Naive thymus-derived CD4-positive, alpha-beta T cell (primary cell): ENCODE measurements at regions of chr19 and their contacts with region 1.

Region 1: DNA sequence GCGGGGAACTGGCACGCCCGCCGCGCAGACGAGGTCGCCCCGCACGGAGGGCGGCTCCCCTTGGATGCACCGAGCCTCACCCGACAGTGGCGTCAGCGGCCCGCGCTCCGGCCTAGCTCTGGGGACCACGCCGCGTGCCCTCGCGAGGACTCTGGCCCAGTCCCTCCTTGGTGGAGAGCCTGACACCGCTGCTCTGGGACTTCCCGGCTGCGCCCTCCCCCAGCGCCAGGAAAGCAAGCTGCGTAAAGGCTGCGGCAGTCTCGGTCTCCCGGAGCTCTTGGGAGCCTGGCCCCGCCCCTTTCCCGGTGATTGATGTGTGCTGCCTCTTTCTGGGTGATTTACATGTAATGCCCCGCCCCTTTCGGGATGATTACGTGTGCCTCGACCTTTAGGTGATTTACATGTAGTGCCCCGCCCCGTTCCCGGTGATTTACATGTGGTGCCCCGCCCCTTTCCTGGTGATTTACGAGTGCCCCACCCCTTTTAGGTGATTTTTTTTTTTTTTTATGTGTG is at the start of gene LENG9:
- DNase-seq: peak; percentile 73 to 97 (median 87)
- ATAC-seq: peak; percentile 81
- H3K4me3 ChIP-seq: peak within 1 kb of the TSS; percentile 88
- H3K4me3 Mint-ChIP-seq: peak within 1 kb of the TSS; percentile 84 to 95 (median 92)
- H3K27ac ChIP-seq: peak within 1 kb of the TSS; percentile 71
- H3K27ac Mint-ChIP-seq: peak within 1 kb of the TSS; percentile 86 to 98 (median 93)
- H3K4me1 ChIP-seq: peaks cover 17 to 23% of the 10 kb centered on the region in 2 donors
- H3K4me1 Mint-ChIP-seq: peaks cover 16 to 35% (median 33%) of the 10 kb centered on the region in 7 donors
- H3K27me3 ChIP-seq: peaks cover 0 to 3% of the 10 kb centered on the region in 2 donors
- H3K27me3 Mint-ChIP-seq: peaks cover 5 to 23% (median 7%) of the 10 kb centered on the region in 5 donors
- total RNA-seq, gene LENG9: 3.5 to 6.1 (median 4.3) TPM

Region 2: DNA sequence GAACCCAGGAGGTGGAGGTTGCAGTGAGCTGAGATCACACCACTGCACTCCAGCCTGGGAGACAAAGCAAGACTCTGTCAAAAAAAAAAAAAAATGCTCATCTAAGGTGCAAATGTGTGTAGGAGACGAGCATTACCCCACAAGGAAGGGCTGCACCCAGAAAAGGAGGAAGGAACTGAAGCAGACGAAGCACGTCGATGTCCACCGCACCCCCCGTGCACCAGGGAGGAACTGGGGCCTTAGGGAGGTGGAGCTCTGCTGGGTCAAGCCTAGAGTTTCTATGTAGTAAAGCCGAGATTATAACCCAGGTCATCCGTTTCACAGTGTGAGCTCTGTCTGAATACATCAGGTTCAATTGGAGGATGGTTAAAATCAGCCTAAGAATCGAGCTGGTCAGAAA is 400.9 kb before region 1 on chr19:
- CTCF ChIA-PET with region 1: no interaction called
- POLR2A ChIA-PET with region 1: no interaction called
- intact Hi-C with region 1: no loop called
- DNase-seq: no peak
- ATAC-seq: peak; percentile 41
- H3K4me3 ChIP-seq: no peak overlapping the region
- H3K4me3 Mint-ChIP-seq: no peak overlapping the region
- H3K27ac ChIP-seq: no peak overlapping the region
- H3K27ac Mint-ChIP-seq: no peak overlapping the region
- H3K4me1 ChIP-seq: no peaks in the 10 kb centered on the region
- H3K4me1 Mint-ChIP-seq: peaks cover 0 to 2% (median 0%) of the 10 kb centered on the region in 7 donors
- H3K27me3 ChIP-seq: no peaks in the 10 kb centered on the region
- H3K27me3 Mint-ChIP-seq: peaks cover 11 to 55% (median 21%) of the 10 kb centered on the region in 5 donors

Region 3: GRCh38 chr19:54137086-54137921 is 326.3 kb before region 1 on chr19 and contains the start of gene CNOT3:
- CTCF ChIA-PET with region 1: no interaction called
- POLR2A ChIA-PET with region 1: no interaction called
- intact Hi-C with region 1: loop called (anchors 1 to 10 kb)
- DNase-seq: peak; percentile 90 to 100 (median 100)
- ATAC-seq: peak; percentile 88
- H3K4me3 ChIP-seq: peak within 1 kb of the TSS; percentile 66
- H3K4me3 Mint-ChIP-seq: peak within 1 kb of the TSS; percentile 87 to 98 (median 90)
- H3K27ac ChIP-seq: peak within 1 kb of the TSS; percentile 97
- H3K27ac Mint-ChIP-seq: peak within 1 kb of the TSS; percentile 85 to 94 (median 92)
- H3K4me1 ChIP-seq: peaks cover 19 to 30% of the 10 kb centered on the region in 2 donors
- H3K4me1 Mint-ChIP-seq: peaks cover 33 to 60% (median 46%) of the 10 kb centered on the region in 7 donors
- H3K27me3 ChIP-seq: no peaks in the 10 kb centered on the region
- H3K27me3 Mint-ChIP-seq: no peaks in the 10 kb centered on the region
- total RNA-seq, gene CNOT3: 38.0 to 84.6 (median 63.9) TPM

Region 4: GRCh38 chr19:54448774-54449700 is 14.6 kb before region 1 on chr19 and contains the start of gene LENG8:
- CTCF ChIA-PET with region 1: interaction called, 3 read pairs
- POLR2A ChIA-PET with region 1: interaction called, 67 read pairs
- intact Hi-C with region 1: loop called (anchors 1 kb)
- DNase-seq: peak; percentile 95 to 99 (median 98)
- ATAC-seq: peak; percentile 94
- H3K4me3 ChIP-seq: peak within 1 kb of the TSS; percentile 85
- H3K4me3 Mint-ChIP-seq: peak within 1 kb of the TSS; percentile 93 to 99 (median 97)
- H3K27ac ChIP-seq: peak within 1 kb of the TSS; percentile 94
- H3K27ac Mint-ChIP-seq: peak within 1 kb of the TSS; percentile 97 to 100 (median 100)
- H3K4me1 ChIP-seq: peaks cover 19 to 39% of the 10 kb centered on the region in 2 donors
- H3K4me1 Mint-ChIP-seq: peaks cover 31 to 61% (median 54%) of the 10 kb centered on the region in 7 donors
- H3K27me3 ChIP-seq: no peaks in the 10 kb centered on the region
- H3K27me3 Mint-ChIP-seq: peaks cover 0 to 3% (median 0%) of the 10 kb centered on the region in 5 donors
- total RNA-seq, gene LENG8: 238 to 685 (median 503) TPM

Region 5: GRCh38 chr19:54492568-54492967 is 29.0 kb after region 1 on chr19:
- CTCF ChIA-PET with region 1: no interaction called
- POLR2A ChIA-PET with region 1: no interaction called
- intact Hi-C with region 1: no loop called
- DNase-seq: no peak
- ATAC-seq: no peak
- H3K4me3 ChIP-seq: no peak overlapping the region
- H3K4me3 Mint-ChIP-seq: no peak overlapping the region
- H3K27ac ChIP-seq: no peak overlapping the region
- H3K27ac Mint-ChIP-seq: no peak overlapping the region
- H3K4me1 ChIP-seq: no peaks in the 10 kb centered on the region
- H3K4me1 Mint-ChIP-seq: peaks cover 2 to 16% (median 6%) of the 10 kb centered on the region in 7 donors
- H3K27me3 ChIP-seq: no peaks in the 10 kb centered on the region
- H3K27me3 Mint-ChIP-seq: peaks cover 7 to 42% (median 18%) of the 10 kb centered on the region in 5 donors

Region 6: DNA sequence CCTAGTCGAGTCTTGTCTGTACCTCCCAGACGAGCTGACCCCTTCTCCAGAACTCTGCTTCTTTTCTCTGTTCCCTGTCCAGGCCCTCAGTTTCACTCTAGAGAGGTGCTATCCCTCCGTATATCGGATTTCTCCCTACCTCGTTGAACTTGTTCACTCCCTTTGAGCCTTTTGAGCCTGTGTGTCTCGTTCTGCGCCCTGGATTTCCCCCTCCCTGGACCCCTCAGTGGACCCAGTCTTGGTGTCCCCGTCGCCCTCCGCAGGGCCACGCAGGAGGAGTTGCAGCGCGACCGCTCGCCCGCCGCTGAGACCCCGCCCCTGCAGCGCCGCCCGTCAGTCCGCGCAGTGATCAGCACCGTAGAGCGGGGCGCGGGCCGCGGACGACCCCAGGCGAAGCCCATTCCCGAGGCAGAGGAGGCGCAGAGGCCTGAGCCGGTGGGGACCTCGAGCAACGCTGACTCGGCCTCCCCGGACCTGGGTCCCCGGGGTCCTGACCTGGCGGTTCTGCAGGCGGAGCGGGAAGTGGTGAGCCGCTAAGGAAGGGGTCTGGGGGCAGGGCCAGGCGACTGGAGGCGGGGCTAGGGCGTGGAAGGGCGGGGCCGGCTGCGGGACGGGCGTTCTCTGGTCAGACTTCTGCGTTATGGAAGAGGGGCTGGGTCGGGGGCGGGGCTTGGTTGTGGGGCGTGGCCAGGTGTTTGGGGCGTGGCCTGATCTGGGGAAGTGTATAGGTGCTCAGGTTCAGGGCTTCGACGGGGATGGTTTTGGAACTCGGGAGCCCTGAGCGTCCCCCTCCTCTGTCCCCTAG is 617.6 kb after region 1 on chr19:
- CTCF ChIA-PET with region 1: no interaction called
- POLR2A ChIA-PET with region 1: no interaction called
- intact Hi-C with region 1: loop called in 1 of 2 experiments (anchors 2 kb)
- DNase-seq: peak; percentile 70 to 96 (median 79)
- ATAC-seq: peak; percentile 93
- H3K4me3 ChIP-seq: peak overlapping the region; percentile 53
- H3K4me3 Mint-ChIP-seq: peak overlapping the region; percentile 78 to 92 (median 86)
- H3K27ac ChIP-seq: peak overlapping the region; percentile 2
- H3K27ac Mint-ChIP-seq: peak overlapping the region in 6 of 9 donors; percentile 56 to 96 (median 66)
- H3K4me1 ChIP-seq: peaks cover 10 to 15% of the 10 kb centered on the region in 2 donors
- H3K4me1 Mint-ChIP-seq: peaks cover 12 to 30% (median 20%) of the 10 kb centered on the region in 7 donors
- H3K27me3 ChIP-seq: peaks cover 0 to 12% of the 10 kb centered on the region in 2 donors
- H3K27me3 Mint-ChIP-seq: peaks cover 38 to 47% (median 46%) of the 10 kb centered on the region in 5 donors

Region 7: DNA sequence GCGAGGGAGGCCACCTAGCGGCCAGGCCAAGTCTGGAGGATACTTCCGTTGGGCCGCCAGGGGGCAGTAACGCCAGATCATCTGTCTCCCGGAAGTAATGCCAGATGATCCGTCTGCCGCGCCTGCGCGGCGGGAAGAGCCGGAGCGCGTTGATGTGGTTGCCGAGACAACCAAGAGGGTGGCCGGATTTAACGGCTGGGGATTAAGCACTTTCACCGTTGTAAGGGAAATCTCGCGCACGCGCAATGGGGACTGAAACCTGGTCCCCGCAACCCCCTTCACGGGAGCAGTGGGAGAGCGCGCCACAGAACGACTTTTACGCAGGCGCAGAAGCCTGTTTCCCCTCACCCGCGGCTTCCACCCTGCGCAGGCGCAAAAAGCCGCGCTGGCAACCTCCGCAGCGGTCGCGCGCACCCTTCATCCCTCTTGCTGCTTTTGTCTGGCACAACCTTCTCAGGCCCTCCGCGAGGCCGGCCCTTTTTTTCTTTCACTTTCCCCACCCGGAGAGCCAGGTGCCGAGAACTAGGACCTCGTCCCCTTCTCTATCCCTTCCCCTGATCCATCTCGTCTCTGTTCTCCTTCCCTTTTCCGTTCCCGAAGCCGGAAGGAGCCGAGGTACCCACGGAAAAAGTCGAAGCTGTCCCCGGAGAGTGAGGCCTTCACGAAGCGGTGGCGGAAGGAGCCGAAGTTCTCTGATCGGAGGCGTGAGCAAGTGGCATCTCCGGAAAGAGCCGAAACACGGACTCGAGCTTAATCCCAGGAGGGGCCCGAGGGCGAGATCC is 1190.4 kb after region 1 on chr19:
- CTCF ChIA-PET with region 1: no interaction called
- POLR2A ChIA-PET with region 1: no interaction called
- intact Hi-C with region 1: loop called in 1 of 2 experiments (anchors 5 kb)
- DNase-seq: peak; percentile 95 to 100 (median 100)
- ATAC-seq: peak; percentile 83
- H3K4me3 ChIP-seq: peak overlapping the region; percentile 98
- H3K4me3 Mint-ChIP-seq: peak overlapping the region; percentile 83 to 99 (median 96)
- H3K27ac ChIP-seq: peak overlapping the region; percentile 99
- H3K27ac Mint-ChIP-seq: peak overlapping the region; percentile 95 to 100 (median 99)
- H3K4me1 ChIP-seq: peaks cover 30 to 36% of the 10 kb centered on the region in 2 donors
- H3K4me1 Mint-ChIP-seq: peaks cover 29 to 55% (median 39%) of the 10 kb centered on the region in 7 donors
- H3K27me3 ChIP-seq: no peaks in the 10 kb centered on the region
- H3K27me3 Mint-ChIP-seq: peaks cover 0 to 2% (median 0%) of the 10 kb centered on the region in 5 donors